ENCODE measurements at regions of chr3 and their contacts with region 1.

Region 1: DNA sequence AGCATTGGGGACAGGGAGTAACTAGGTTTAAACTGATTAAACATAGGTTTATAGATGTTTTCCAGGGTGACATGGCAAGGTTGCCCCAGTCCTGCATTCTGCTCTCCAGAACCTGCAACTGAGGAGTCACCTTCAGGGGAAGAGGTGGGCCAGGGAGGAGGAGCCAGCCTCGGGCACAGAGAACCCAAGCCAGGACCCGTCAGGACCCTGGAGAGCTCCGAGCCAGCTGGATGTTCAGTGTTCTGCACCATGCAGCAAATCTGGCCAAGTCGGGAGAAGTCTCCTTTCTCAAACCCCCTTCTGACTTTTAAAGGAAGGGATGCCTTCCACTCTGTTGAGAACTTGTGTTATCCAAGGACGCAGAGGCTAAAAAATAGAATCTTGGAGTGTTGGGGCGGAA is 62.1 kb upstream of the SLC6A11 start:
- DNase-seq: peak in 7 of 42 donors; percentile 22 to 63 (median 43)

Region 2: GRCh38 chr3:10232137-10232536 is 521.8 kb before region 1 on chr3:
- intact Hi-C with region 1: no loop called
- DNase-seq: peak in 2 of 42 donors; percentile 21 to 27

Region 3: DNA sequence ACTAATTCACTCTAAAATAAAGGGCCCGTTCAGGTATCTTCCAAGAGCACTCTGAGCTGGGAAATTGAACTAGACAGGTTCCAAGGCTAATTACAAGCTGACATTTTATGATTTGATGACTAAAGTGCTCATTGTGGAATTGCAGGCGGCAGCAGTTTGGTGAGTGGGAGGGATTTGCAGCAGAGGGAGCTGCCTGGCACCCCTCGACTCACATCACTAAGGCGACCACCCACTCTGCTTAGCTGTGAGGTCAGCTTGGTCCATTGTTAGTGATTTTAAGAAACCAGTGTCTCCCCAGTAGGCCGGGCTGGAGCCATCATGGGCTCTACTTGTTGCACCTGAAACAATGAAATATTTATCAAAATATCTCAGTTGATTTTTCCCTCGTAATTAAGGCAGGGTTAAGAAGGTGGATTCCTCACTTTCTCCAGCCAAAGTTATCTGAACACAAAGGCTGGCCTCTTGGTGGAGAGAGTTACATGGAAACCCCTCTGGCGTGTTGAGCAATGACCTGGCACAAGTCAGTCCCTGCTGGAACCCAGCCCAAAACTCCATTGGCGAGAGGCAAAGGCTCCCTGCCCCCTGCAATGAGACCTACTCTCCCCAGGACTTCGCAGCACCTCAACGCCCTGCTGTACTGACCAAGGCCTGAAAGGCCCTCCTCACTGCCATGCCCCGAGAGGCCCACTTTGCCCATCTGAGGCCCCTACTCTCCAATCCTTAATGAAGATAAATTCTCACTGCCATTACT is 183.6 kb before region 1 on chr3:
- intact Hi-C with region 1: no loop called
- DNase-seq: peak in 35 of 42 donors; percentile 18 to 80 (median 51)

Region 4: DNA sequence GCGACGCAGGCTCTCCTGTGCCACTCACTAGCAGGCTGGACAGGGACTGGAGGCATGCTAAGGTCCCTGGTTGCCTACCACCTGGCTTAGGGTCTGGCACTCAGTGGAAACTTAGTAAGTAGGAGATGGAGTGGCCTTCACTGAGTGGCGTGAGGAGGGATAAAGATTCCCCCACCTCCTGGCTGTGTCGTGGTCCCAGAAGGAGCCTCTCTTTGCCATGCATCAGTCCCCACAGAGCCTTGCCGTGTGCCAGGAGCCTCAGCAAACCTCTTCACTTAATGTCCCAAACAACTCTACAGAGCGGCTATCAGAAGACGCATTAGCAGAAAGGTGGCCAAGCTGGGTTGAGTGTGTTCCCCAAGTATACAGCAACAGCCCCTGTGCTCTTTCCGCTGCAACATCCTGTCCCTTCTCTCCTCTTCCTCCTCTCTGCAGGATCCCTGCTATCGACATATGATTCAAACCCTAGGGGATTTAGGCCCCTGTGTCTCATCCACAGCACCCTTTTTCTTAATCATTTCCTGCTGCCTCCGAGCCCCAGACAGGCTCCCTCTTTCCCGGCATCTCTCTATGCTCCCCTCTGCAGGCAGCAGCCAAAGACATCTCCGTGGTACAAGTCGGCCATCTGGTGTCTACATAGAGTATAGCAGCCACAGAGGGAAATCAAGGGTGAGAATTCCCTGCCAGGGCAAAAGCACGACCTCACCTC is 305.3 kb after region 1 on chr3:
- intact Hi-C with region 1: loop called (anchors 2 kb)
- DNase-seq: peak; percentile 54 to 92 (median 78)

Measured in head of caudate nucleus (tissue), 42 donors.